ENCODE measurements at regions of chr4 and their contacts with region 1.

Region 1: DNA sequence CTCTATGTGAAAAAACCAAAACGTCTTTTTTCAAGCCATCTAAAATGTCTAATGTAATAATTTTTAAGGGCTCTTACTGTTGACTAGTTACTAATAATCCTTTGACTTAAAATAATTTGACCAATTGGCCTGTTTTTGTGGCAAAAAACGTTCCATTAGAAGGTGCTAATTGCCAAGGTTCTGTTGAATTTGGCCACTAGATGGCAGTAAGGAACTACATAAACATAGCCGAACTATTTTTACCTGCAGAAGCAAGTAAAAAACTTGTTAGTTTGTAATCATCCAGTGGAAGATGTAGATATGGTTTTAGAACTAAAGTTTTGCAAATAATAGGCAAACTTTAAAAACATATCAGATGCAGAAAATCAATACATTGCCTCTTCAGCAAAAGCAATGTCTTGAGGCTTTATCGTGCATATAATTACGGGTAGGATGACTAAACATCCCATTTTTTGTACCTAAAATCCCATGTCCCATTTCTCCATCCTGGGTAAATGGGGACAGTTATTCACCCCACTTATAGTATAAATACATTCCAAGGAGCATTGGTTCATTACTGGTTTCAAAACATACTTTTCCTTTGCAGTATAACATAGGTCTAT is 57.6 kb downstream of the PROM1 start:
- DNase-seq: peak in 1 of 2 donors; percentile 81
- ATAC-seq: peak in 1 of 3 donors; percentile 54
- H3K4me3 ChIP-seq: no peak overlapping the region
- H3K4me3 Mint-ChIP-seq: no peak overlapping the region
- H3K27ac ChIP-seq: no peak overlapping the region
- H3K27ac Mint-ChIP-seq: no peak overlapping the region
- H3K4me1 ChIP-seq: no peaks in the 10 kb centered on the region
- H3K4me1 Mint-ChIP-seq: no peaks in the 10 kb centered on the region
- H3K27me3 ChIP-seq: peaks cover 3% of the 10 kb centered on the region
- H3K27me3 Mint-ChIP-seq: peaks cover 9 to 26% of the 10 kb centered on the region in 2 donors
- CTCF ChIP-seq: peak; percentile 97

Region 2: GRCh38 chr4:16205298-16206164 is 179.3 kb after region 1 on chr4:
- intact Hi-C with region 1: loop called (anchors 10 kb)
- DNase-seq: peak in 1 of 2 donors; percentile 56
- ATAC-seq: peak; percentile 63 to 86 (median 74)
- H3K4me3 ChIP-seq: no peak overlapping the region
- H3K4me3 Mint-ChIP-seq: peak overlapping the region; percentile 52
- H3K27ac ChIP-seq: no peak overlapping the region
- H3K27ac Mint-ChIP-seq: no peak overlapping the region
- H3K4me1 ChIP-seq: peaks cover 8% of the 10 kb centered on the region
- H3K4me1 Mint-ChIP-seq: peaks cover 31 to 42% of the 10 kb centered on the region in 2 donors
- H3K27me3 ChIP-seq: no peaks in the 10 kb centered on the region
- H3K27me3 Mint-ChIP-seq: no peaks in the 10 kb centered on the region
- CTCF ChIP-seq: peak; percentile 81

Region 3: DNA sequence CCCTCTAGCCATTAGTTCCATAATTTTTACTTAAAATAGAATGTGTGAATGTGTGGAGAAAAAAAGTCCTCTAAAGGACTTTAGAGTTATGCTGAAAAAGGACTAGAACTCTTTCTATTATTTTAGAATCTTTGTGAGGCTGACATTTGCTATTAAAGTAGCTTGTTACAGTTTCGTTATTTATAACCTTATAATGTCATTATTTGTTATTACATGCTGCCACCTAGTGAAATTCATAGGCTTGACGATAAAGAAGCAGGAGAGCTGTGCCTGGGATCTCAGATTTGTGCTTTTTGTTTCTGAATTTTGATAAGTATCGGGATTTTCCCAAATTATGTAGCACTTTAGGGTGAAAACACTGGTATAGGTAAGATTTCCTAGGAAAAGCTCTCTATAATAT is 238.5 kb after region 1 on chr4:
- intact Hi-C with region 1: loop called (anchors 1 kb)
- DNase-seq: peak in 1 of 2 donors; percentile 66
- ATAC-seq: peak in 2 of 3 donors; percentile 56 to 73
- H3K4me3 ChIP-seq: no peak overlapping the region
- H3K4me3 Mint-ChIP-seq: no peak overlapping the region
- H3K27ac ChIP-seq: no peak overlapping the region
- H3K27ac Mint-ChIP-seq: no peak overlapping the region
- H3K4me1 ChIP-seq: no peaks in the 10 kb centered on the region
- H3K4me1 Mint-ChIP-seq: no peaks in the 10 kb centered on the region
- H3K27me3 ChIP-seq: no peaks in the 10 kb centered on the region
- H3K27me3 Mint-ChIP-seq: no peaks in the 10 kb centered on the region
- CTCF ChIP-seq: peak; percentile 54

Region 4: GRCh38 chr4:17447675-17448298 is 1421.5 kb after region 1 on chr4:
- intact Hi-C with region 1: loop called (anchors 10 kb)
- DNase-seq: peak in 1 of 2 donors; percentile 80
- ATAC-seq: peak; percentile 66 to 92 (median 82)
- H3K4me3 ChIP-seq: no peak overlapping the region
- H3K4me3 Mint-ChIP-seq: no peak overlapping the region
- H3K27ac ChIP-seq: no peak overlapping the region
- H3K27ac Mint-ChIP-seq: no peak overlapping the region
- H3K4me1 ChIP-seq: no peaks in the 10 kb centered on the region
- H3K4me1 Mint-ChIP-seq: peaks cover 4% of the 10 kb centered on the region in 2 donors
- H3K27me3 ChIP-seq: no peaks in the 10 kb centered on the region
- H3K27me3 Mint-ChIP-seq: peaks cover 10 to 12% of the 10 kb centered on the region in 2 donors
- CTCF ChIP-seq: peak; percentile 57

Measured in natural killer cell (primary cell).